Heart left ventricle (tissue), 16 donors: ENCODE measurements at regions of chr7 and their contacts with region 1.

Region 1: DNA sequence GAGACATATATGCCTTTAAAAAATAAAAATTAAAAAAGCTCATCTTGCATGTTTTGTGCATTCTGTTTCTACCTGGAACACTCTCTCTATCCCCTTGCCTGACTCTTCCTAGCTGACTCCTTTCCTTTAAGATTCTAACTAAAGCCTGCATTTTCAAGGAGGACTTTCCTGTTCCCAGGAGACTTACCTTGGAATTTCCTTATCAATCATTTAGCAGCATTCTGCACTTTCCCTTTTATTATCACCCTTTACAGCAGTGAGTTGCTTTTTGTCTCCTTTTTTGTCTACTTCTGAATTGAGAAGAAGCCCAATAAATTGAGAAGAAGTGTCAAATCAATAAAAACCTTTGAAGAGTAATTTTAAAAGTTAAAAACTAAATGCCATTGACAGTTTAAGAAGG is 142.2 kb upstream of the TMEM196 start:
- DNase-seq: no peak
- ATAC-seq: no peak
- H3K4me3 ChIP-seq: no peak overlapping the region
- H3K27ac ChIP-seq: no peak overlapping the region
- H3K4me1 ChIP-seq: peaks cover 0 to 8% (median 0%) of the 10 kb centered on the region in 12 donors
- H3K27me3 ChIP-seq: no peaks in the 10 kb centered on the region
- CTCF ChIP-seq: no peak
- POLR2A ChIP-seq: no peak

Region 2: DNA sequence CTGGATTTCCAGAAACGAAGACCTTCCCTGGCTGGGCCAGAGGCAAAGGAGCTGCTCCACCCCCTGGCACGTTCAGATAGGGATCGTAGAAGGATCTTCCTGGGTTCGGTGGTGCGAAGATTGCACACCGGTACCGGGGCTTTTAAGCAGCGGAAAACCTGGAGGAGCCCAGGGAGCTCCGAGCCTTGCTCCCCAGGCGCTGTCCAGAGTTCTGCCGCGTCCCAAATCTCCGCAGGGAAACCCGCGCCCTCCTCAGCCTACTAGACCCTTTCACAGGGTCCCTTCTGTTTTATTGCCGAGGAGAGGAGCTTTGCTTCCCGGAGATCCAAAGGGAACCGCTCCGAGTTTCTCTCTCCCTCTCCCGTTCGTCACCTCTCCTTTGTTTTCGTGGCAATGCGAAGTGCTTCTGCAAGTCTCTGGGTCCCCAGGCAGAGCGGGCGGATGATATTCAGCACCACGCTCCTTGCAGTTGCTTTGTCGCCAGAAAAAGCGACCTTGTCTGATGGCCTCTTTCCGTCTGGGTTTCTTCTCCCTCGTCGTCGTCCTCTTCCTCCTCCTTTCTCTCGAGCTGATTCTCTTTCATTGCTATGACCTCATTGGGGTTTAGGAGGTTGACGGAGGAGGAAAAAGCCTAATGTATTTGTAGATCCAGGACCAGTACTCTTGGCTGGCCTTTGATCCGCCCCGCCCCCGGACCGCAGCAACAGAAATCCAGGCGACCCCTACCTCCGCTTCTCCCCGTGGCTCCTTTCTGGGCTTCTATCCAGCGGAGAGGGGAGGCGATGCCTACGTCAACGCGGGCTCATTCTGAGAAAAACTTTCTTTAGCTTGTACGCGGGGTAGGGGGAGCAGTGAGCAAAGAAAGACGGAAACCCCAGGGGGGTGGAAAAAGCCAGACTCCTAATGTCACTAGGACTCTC is 142.5 kb before region 1 on chr7 and contains the start of gene TMEM196:
- intact Hi-C with region 1: no loop called
- DNase-seq: peak in 1 of 5 donors; percentile 20
- ATAC-seq: peak in 1 of 4 donors; percentile 61
- H3K4me3 ChIP-seq: peak within 1 kb of the TSS in 3 of 12 donors; percentile 3 to 23 (median 8)
- H3K27ac ChIP-seq: no peak within 1 kb of the TSS
- H3K4me1 ChIP-seq: peaks cover 0 to 12% (median 0%) of the 10 kb centered on the region in 12 donors
- H3K27me3 ChIP-seq: peaks cover 3 to 58% (median 28%) of the 10 kb centered on the region in 9 donors
- CTCF ChIP-seq: no peak
- POLR2A ChIP-seq: no peak
- total RNA-seq, gene TMEM196: not detected

Region 3: DNA sequence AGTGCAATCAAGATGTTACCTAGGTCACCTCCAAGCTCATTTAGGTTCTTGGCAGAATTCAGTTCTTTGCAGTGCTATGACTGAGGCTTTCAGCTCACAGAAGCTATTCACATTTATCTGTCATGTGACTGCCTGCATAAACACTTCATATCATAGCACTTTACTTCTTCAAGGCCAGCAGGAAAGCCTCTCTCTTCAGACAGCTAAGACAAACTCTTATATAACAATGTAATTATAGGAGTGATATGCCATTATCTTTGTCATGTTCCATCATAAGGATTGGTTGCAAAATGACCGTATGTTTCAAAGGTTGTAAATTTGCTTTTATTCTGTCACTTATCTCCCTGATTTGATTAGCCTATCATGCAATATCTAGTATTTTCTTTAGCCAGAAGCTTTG is 63.4 kb before region 1 on chr7:
- intact Hi-C with region 1: loop called in 1 of 10 experiments (anchors 2 kb)
- DNase-seq: no peak
- ATAC-seq: no peak
- H3K4me3 ChIP-seq: no peak overlapping the region
- H3K27ac ChIP-seq: no peak overlapping the region
- H3K4me1 ChIP-seq: no peaks in the 10 kb centered on the region
- H3K27me3 ChIP-seq: no peaks in the 10 kb centered on the region
- CTCF ChIP-seq: no peak
- POLR2A ChIP-seq: no peak